ENCODE measurements at regions of chr1 and their contacts with region 1.

Region 1: DNA sequence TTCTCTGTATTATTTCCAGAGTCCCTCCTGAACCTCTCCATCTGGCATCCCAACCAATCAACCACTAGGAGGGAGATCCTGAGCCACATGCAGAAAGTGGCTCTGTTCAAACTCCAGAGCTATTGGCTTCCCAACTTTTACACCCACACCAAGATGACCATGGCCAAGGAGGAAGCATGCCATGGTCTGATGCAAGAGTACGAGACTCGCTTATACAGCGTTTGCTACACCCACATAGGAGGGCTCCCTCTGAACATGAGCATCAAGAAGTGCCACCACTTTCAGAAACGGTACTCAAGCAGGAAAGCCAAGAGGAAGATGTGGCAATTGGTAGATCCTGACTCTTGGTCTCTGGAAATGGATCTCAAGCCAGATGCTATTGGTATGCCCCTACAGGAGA is 23.6 kb downstream of the RGSL1 start:
- DNase-seq: no peak
- H3K4me3 ChIP-seq: no peak overlapping the region
- H3K27ac ChIP-seq: no peak overlapping the region
- H3K4me1 ChIP-seq: no peaks in the 10 kb centered on the region
- H3K27me3 ChIP-seq: no peaks in the 10 kb centered on the region
- CTCF ChIP-seq: no peak
- EP300 ChIP-seq: no peak
- POLR2A ChIP-seq: no peak
- RAD21 ChIP-seq: no peak

Region 2: GRCh38 chr1:182175361-182175931 is 298.1 kb before region 1 on chr1:
- CTCF ChIA-PET with region 1: no interaction called
- POLR2A ChIA-PET with region 1: no interaction called
- DNase-seq: no peak
- H3K4me3 ChIP-seq: no peak overlapping the region
- H3K27ac ChIP-seq: no peak overlapping the region
- H3K4me1 ChIP-seq: no peaks in the 10 kb centered on the region
- H3K27me3 ChIP-seq: no peaks in the 10 kb centered on the region
- CTCF ChIP-seq: no peak
- EP300 ChIP-seq: no peak
- POLR2A ChIP-seq: no peak
- RAD21 ChIP-seq: no peak

Region 3: DNA sequence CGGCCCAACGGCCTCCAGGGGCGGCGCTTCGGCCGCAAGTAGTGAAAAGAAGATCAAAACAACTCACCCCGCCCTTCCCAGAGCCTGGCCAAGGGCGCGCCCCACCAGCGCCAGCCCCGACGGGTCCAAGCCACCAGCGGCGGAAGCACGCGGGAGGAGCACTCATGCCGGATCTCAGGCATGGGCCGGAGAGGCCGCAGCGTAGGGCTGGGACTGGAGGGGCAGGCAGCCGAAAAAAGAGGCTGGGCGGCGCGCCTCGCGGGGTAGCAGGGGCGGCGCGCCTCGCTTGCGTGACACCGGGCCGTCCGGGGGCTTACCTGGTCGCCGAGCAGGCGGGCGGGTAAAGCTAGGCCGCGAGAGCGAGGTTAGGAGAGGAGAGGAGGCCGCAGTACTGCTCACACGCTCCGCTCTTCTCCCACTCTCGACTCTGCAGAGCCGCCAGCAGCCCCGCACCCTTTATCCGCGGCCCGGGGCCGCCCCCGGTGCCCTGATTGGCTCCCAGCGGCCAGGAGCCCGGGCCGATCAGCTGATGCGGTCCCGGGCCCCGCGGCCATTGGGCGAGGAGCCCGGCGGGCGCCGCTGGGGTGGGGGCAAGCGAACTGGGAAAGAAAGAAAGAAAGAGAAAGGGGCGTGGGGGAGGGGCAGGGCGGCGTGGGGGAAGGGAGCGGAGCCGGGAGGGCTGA is 82.1 kb before region 1 on chr1 and contains the start of gene GLUL:
- CTCF ChIA-PET with region 1: no interaction called
- POLR2A ChIA-PET with region 1: no interaction called
- DNase-seq: peak; percentile 89 to 94
- H3K4me3 ChIP-seq: peak within 1 kb of the TSS; percentile 68 to 99 (median 96)
- H3K27ac ChIP-seq: peak within 1 kb of the TSS; percentile 97
- H3K4me1 ChIP-seq: peaks cover 4 to 12% (median 8%) of the 10 kb centered on the region in 4 experiments; a peak in 5 of 7 replicates
- H3K27me3 ChIP-seq: no peaks in the 10 kb centered on the region; a peak in 1 of 7 replicates
- CTCF ChIP-seq: no peak
- EP300 ChIP-seq: no peak
- POLR2A ChIP-seq: peak; percentile 99
- RAD21 ChIP-seq: no peak
- total RNA-seq, gene GLUL: 453 and 457 TPM in 2 replicates

Region 4: GRCh38 chr1:182484591-182485257 is 11.2 kb after region 1 on chr1:
- CTCF ChIA-PET with region 1: interaction called, 19 read pairs
- POLR2A ChIA-PET with region 1: no interaction called
- DNase-seq: peak; percentile 19 to 55
- H3K4me3 ChIP-seq: no peak overlapping the region
- H3K27ac ChIP-seq: no peak overlapping the region
- H3K4me1 ChIP-seq: peaks cover 0 to 3% (median 1%) of the 10 kb centered on the region in 4 experiments; a peak in 3 of 7 replicates
- H3K27me3 ChIP-seq: no peaks in the 10 kb centered on the region
- CTCF ChIP-seq: peak; percentile 61 to 87 (median 81)
- EP300 ChIP-seq: no peak
- POLR2A ChIP-seq: no peak
- RAD21 ChIP-seq: peak; percentile 36 to 47

Region 5: GRCh38 chr1:182520736-182521135 is 47.2 kb after region 1 on chr1:
- CTCF ChIA-PET with region 1: no interaction called
- POLR2A ChIA-PET with region 1: no interaction called
- DNase-seq: no peak
- H3K4me3 ChIP-seq: no peak overlapping the region
- H3K27ac ChIP-seq: no peak overlapping the region
- H3K4me1 ChIP-seq: no peaks in the 10 kb centered on the region
- H3K27me3 ChIP-seq: no peaks in the 10 kb centered on the region
- CTCF ChIP-seq: no peak
- EP300 ChIP-seq: no peak
- POLR2A ChIP-seq: no peak
- RAD21 ChIP-seq: no peak

Measured in H1 (cell line).